Gastrocnemius medialis (tissue), 4 donors: ENCODE measurements at regions of chr22 and their contacts with region 1.

Region 1: GRCh38 chr22:45984316-45984916 is 7.5 kb upstream of the WNT7B start:
- DNase-seq: no peak
- ATAC-seq: no peak
- H3K4me3 ChIP-seq: no peak overlapping the region
- H3K27ac ChIP-seq: no peak overlapping the region
- H3K4me1 ChIP-seq: no peaks in the 10 kb centered on the region
- H3K27me3 ChIP-seq: peaks cover 0 to 8% (median 0%) of the 10 kb centered on the region in 3 donors
- CTCF ChIP-seq: no peak
- POLR2A ChIP-seq: no peak

Region 2: GRCh38 chr22:45577746-45578523 is 406.5 kb before region 1 on chr22:
- in situ Hi-C with region 1: loop called in 2 of 4 experiments (anchors 5 to 10 kb)
- intact Hi-C with region 1: no loop called
- DNase-seq: peak; percentile 47 to 64
- ATAC-seq: peak; percentile 83 to 86
- H3K4me3 ChIP-seq: no peak overlapping the region
- H3K27ac ChIP-seq: no peak overlapping the region
- H3K4me1 ChIP-seq: no peaks in the 10 kb centered on the region
- H3K27me3 ChIP-seq: peaks cover 0 to 13% (median 6%) of the 10 kb centered on the region in 3 donors
- CTCF ChIP-seq: peak; percentile 78 to 95 (median 91)
- POLR2A ChIP-seq: no peak

Region 3: DNA sequence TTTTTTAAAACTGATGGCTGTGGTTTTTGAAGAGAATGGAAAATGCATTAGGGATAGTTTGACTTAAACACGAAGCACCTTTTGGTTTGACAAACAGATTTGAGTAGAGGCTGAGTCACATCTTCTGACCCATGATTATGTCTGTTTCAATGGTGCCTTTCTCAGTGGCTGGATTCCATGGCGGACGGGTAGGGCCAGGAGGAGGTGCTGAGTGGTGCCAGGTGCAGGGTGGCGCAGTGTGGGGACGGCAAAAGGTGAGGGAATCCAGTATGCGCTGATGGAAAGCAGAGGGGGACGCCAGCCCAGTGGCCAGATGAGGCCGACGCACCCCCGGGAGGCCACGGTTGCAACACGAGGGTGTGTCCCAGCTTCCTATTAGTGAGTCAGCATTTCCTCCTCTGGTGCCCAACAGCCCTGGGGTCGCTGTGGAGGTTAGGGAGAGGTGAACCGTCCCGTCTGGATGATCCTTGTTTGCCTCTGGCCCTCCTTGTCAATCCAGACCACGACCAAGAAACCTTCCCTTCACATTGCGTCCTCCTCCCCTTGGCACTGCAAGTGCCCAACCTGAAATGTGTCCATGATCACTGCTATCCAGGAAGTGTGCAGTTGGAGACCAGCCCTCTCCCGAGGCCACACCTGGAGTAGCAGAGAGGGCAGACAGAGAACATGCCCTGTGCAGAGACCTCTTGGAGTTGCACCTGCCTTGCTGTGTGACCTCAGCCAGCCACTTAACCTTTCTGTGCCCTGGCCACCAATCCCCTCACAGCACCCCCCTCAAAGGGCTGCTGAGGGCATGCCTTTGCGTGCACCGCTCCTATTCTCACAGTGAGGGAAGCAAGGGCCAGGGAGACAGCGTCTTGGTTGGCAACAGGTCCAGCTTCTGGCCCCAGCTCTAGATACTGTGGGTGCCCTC is 345.3 kb before region 1 on chr22:
- in situ Hi-C with region 1: loop called in 3 of 4 experiments (anchors 5 to 10 kb)
- intact Hi-C with region 1: no loop called
- DNase-seq: peak in 1 of 2 donors; percentile 41
- ATAC-seq: no peak
- H3K4me3 ChIP-seq: no peak overlapping the region
- H3K27ac ChIP-seq: no peak overlapping the region
- H3K4me1 ChIP-seq: no peaks in the 10 kb centered on the region
- H3K27me3 ChIP-seq: no peaks in the 10 kb centered on the region
- CTCF ChIP-seq: no peak
- POLR2A ChIP-seq: no peak

Region 4: GRCh38 chr22:45645526-45646414 is 338.6 kb before region 1 on chr22:
- in situ Hi-C with region 1: loop called (anchors 5 to 10 kb)
- intact Hi-C with region 1: no loop called
- DNase-seq: peak; percentile 24 to 49
- ATAC-seq: peak; percentile 75 to 83
- H3K4me3 ChIP-seq: peak overlapping the region in 1 of 4 donors; percentile 25
- H3K27ac ChIP-seq: no peak overlapping the region
- H3K4me1 ChIP-seq: no peaks in the 10 kb centered on the region
- H3K27me3 ChIP-seq: peaks cover 0 to 15% (median 11%) of the 10 kb centered on the region in 3 donors
- CTCF ChIP-seq: peak; percentile 80 to 97 (median 94)
- POLR2A ChIP-seq: no peak

Region 5: GRCh38 chr22:45656577-45656976 is 327.8 kb before region 1 on chr22:
- in situ Hi-C with region 1: loop called in 1 of 4 experiments (anchors 10 kb)
- intact Hi-C with region 1: no loop called
- DNase-seq: no peak
- ATAC-seq: no peak
- H3K4me3 ChIP-seq: no peak overlapping the region
- H3K27ac ChIP-seq: no peak overlapping the region
- H3K4me1 ChIP-seq: no peaks in the 10 kb centered on the region
- H3K27me3 ChIP-seq: peaks cover under 1 to 3% (median 3%) of the 10 kb centered on the region in 3 donors
- CTCF ChIP-seq: no peak
- POLR2A ChIP-seq: no peak

Region 6: GRCh38 chr22:46027192-46028105 is 43.0 kb after region 1 on chr22:
- in situ Hi-C with region 1: no loop called
- intact Hi-C with region 1: no loop called
- DNase-seq: peak in 1 of 2 donors; percentile 68
- ATAC-seq: peak; percentile 72 to 81
- H3K4me3 ChIP-seq: peak overlapping the region; percentile 15 to 65 (median 51)
- H3K27ac ChIP-seq: peak overlapping the region; percentile 70 to 85 (median 80)
- H3K4me1 ChIP-seq: peaks cover 5 to 6% of the 10 kb centered on the region in 2 donors
- H3K27me3 ChIP-seq: no peaks in the 10 kb centered on the region
- CTCF ChIP-seq: peak in 4 of 5 experiments; percentile 20 to 46 (median 38)
- POLR2A ChIP-seq: peak; percentile 26 to 49

Region 7: GRCh38 chr22:46303347-46303965 is 319.0 kb after region 1 on chr22:
- in situ Hi-C with region 1: loop called in 1 of 4 experiments (anchors 10 kb)
- intact Hi-C with region 1: no loop called
- DNase-seq: no peak
- ATAC-seq: no peak
- H3K4me3 ChIP-seq: no peak overlapping the region
- H3K27ac ChIP-seq: no peak overlapping the region
- H3K4me1 ChIP-seq: no peaks in the 10 kb centered on the region
- H3K27me3 ChIP-seq: no peaks in the 10 kb centered on the region
- CTCF ChIP-seq: no peak
- POLR2A ChIP-seq: no peak